Transverse colon (tissue), 4 donors: ENCODE measurements at regions of chr12 and their contacts with region 1.

Region 1: DNA sequence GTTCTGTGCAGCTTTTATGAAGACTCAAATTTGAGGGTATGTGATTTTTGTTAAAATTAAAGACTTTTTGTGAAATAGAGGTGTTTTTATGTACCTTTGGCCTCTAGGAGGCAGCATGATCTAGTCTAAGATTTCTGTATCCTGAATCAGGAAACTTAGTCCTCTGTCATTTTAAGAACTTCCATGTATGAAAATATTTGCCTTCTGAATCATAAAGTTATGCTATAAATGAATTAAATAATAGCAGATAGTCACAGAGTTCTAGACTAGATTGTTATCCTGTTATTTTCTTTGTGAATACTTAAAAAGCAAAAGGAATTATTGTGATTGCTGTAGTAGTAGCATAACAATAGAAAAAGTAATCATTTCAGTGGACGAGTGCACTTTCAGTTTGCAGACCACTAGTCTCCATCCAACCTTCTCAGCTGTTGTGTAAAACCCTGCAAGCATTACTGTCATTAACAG is 56.3 kb downstream of the FGD4 start:
- DNase-seq: no peak
- H3K4me3 ChIP-seq: peak overlapping the region in 1 of 4 donors; percentile 27
- H3K27ac ChIP-seq: peak overlapping the region; percentile 56 to 70 (median 64)
- H3K4me1 ChIP-seq: peaks cover 20 to 51% (median 33%) of the 10 kb centered on the region in 4 donors
- H3K27me3 ChIP-seq: no peaks in the 10 kb centered on the region
- CTCF ChIP-seq: peak; percentile 49 to 72 (median 62)
- EP300 ChIP-seq: no peak
- POLR2A ChIP-seq: no peak

Region 2: GRCh38 chr12:32558903-32559302 is 103.3 kb after region 1 on chr12:
- in situ Hi-C with region 1: loop called in 1 of 4 experiments (anchors 25 kb)
- intact Hi-C with region 1: no loop called
- DNase-seq: no peak
- H3K4me3 ChIP-seq: no peak overlapping the region
- H3K27ac ChIP-seq: peak overlapping the region; percentile 8 to 61 (median 48)
- H3K4me1 ChIP-seq: peaks cover 0 to 36% (median 5%) of the 10 kb centered on the region in 4 donors
- H3K27me3 ChIP-seq: no peaks in the 10 kb centered on the region
- CTCF ChIP-seq: no peak
- EP300 ChIP-seq: no peak
- POLR2A ChIP-seq: no peak

Region 3: DNA sequence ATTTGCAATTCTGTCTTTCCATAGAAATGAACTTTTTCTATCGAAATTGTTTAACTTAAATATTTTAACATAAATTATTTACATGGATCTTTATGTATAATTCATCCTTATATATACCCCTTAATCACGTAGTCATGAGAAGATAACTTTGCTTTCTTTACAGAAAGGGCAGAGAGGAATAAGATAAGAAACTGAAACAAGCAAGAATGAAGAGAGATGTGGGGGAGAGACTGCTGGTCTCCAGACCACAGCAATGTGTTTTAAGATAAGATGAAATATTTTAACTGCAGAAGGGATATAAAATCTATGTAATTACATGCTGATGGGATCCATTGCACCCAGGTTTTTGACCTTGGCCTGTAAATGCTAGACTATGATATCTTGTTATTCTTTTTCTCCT is 188.8 kb after region 1 on chr12:
- in situ Hi-C with region 1: loop called in 1 of 4 experiments (anchors 10 kb)
- intact Hi-C with region 1: no loop called
- DNase-seq: no peak
- H3K4me3 ChIP-seq: no peak overlapping the region
- H3K27ac ChIP-seq: no peak overlapping the region
- H3K4me1 ChIP-seq: no peaks in the 10 kb centered on the region
- H3K27me3 ChIP-seq: no peaks in the 10 kb centered on the region
- CTCF ChIP-seq: no peak
- EP300 ChIP-seq: no peak
- POLR2A ChIP-seq: no peak

Region 4: GRCh38 chr12:32659908-32660440 is 204.3 kb after region 1 on chr12:
- in situ Hi-C with region 1: loop called in 1 of 4 experiments (anchors 10 kb)
- intact Hi-C with region 1: loop called (anchors 10 kb)
- DNase-seq: no peak
- H3K4me3 ChIP-seq: no peak overlapping the region
- H3K27ac ChIP-seq: peak overlapping the region in 2 of 4 donors; percentile 13 to 24
- H3K4me1 ChIP-seq: peaks cover 0 to 10% (median 5%) of the 10 kb centered on the region in 4 donors
- H3K27me3 ChIP-seq: no peaks in the 10 kb centered on the region
- CTCF ChIP-seq: no peak
- EP300 ChIP-seq: no peak
- POLR2A ChIP-seq: no peak

Region 5: GRCh38 chr12:32679091-32679919 is 223.7 kb after region 1 on chr12 and contains the start of gene DNM1L:
- in situ Hi-C with region 1: loop called in 1 of 4 experiments (anchors 10 kb)
- intact Hi-C with region 1: loop called (anchors 10 kb)
- DNase-seq: peak; percentile 95
- H3K4me3 ChIP-seq: peak within 1 kb of the TSS; percentile 50 to 97 (median 84)
- H3K27ac ChIP-seq: peak within 1 kb of the TSS; percentile 96 to 99 (median 98)
- H3K4me1 ChIP-seq: peaks cover 7 to 19% (median 14%) of the 10 kb centered on the region in 4 donors
- H3K27me3 ChIP-seq: no peaks in the 10 kb centered on the region
- CTCF ChIP-seq: peak in 3 of 5 experiments; percentile 14 to 24 (median 17)
- EP300 ChIP-seq: no peak
- POLR2A ChIP-seq: peak; percentile 90
- total RNA-seq, gene DNM1L: 41.2 to 61.3 (median 44.2) TPM